ENCODE measurements at regions of chr18 and their contacts with region 1.

Region 1: DNA sequence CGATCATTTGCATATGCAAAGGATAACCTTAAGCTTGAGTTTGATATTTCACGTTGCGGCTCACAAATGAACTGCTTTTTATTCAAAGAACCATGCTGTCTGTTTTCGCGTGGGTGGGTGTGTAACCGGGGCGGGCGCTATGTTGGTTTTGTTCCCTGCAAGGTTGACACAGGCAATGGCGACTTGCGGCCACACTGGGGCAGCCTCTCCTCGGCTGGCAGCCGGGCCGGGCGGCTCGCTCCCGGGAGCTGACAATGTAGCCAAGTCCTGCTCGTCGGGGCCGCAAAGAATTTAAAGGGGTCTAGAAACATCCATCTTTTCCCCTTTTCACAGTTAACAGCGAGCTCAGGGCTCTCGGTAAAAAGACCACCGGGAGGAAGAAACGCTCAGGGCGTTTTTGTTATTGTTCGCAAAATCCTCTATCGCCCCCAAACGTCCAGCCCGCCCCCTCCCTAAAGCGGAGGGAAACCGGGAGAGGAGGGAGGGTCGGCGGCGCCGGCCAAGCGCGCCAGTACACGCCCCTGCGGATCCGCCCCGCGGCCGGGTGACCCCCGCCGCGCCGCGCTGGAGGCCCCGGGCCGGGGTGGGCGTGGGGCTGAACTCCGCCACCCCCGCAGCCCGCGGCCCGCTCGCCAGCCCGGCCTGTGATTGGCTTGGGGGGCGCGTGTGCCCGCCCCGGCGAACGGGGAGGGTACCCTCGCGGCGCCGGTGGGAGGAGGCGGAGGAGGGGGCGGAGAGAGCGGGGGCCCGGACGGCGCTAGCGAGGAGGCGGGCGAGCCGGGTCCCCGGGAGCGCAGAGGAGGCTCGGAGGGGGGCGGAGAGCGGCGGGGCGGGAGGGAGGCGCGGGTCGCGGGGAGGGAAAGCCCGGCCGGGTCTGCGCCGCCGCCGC is at the start of gene NEDD4L:
- DNase-seq: peak; percentile 91
- H3K4me3 ChIP-seq: peak within 1 kb of the TSS; percentile 87
- H3K27ac ChIP-seq: peak within 1 kb of the TSS; percentile 78
- H3K4me1 ChIP-seq: peaks cover 5% of the 10 kb centered on the region
- H3K27me3 ChIP-seq: no peaks in the 10 kb centered on the region
- CTCF ChIP-seq: peak; percentile 92
- total RNA-seq, gene NEDD4L: 15.3 and 23.8 TPM in 2 replicates

Region 2: DNA sequence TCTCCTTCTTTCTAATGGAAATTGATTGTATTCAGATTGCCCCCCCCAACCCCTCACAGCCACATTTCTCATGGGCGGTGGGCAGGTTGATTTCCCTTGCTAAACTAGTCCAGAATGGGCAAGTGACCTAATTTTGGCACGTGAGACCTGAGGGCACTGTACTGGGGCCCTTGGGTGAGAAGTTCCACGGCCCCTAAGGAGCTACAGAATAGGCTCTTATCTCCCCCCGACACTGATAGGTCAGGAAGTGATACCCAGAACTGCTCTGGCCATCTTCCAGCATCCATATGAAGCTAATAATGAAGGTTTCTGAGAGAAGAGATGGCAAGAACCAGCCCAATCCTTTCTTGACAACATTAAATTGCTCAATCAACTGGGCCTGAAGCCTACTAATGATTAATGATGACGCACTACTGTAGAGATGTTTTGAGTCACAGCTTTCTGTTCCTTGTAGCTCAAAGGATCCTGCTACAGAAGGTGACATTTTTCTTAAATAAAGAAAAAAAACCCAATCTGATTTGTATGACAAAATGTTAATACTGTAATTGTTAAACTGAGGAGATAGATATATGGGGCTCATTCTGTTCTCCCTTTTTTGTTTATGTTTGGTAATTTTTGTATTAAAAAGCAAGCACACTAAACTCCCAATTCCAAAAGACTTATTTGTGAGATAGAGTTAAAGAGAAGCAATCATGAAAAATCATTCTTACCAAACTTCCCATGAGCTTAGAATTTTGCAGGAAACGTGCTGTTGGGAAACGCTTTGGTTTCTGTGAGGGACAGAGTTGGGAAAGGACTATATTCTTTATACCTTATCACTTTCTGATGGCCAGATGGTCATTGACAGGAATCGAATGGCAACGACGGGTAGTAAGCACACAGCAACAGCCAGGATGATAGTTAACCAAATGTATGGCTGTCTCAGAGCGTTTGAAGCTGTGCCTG is 393.9 kb before region 1 on chr18:
- CTCF ChIA-PET with region 1: no interaction called
- POLR2A ChIA-PET with region 1: no interaction called
- intact Hi-C with region 1: loop called (anchors 10 kb)
- DNase-seq: peak; percentile 48
- H3K4me3 ChIP-seq: no peak overlapping the region
- H3K27ac ChIP-seq: peak overlapping the region; percentile 12
- H3K4me1 ChIP-seq: peaks cover 22% of the 10 kb centered on the region
- H3K27me3 ChIP-seq: no peaks in the 10 kb centered on the region
- CTCF ChIP-seq: no peak

Region 3: GRCh38 chr18:58117786-58118403 is 74.2 kb after region 1 on chr18:
- CTCF ChIA-PET with region 1: interaction called, 21 read pairs
- POLR2A ChIA-PET with region 1: no interaction called
- intact Hi-C with region 1: loop called (anchors 5 kb)
- DNase-seq: no peak
- H3K4me3 ChIP-seq: no peak overlapping the region
- H3K27ac ChIP-seq: no peak overlapping the region
- H3K4me1 ChIP-seq: no peaks in the 10 kb centered on the region
- H3K27me3 ChIP-seq: no peaks in the 10 kb centered on the region
- CTCF ChIP-seq: no peak

Region 4: DNA sequence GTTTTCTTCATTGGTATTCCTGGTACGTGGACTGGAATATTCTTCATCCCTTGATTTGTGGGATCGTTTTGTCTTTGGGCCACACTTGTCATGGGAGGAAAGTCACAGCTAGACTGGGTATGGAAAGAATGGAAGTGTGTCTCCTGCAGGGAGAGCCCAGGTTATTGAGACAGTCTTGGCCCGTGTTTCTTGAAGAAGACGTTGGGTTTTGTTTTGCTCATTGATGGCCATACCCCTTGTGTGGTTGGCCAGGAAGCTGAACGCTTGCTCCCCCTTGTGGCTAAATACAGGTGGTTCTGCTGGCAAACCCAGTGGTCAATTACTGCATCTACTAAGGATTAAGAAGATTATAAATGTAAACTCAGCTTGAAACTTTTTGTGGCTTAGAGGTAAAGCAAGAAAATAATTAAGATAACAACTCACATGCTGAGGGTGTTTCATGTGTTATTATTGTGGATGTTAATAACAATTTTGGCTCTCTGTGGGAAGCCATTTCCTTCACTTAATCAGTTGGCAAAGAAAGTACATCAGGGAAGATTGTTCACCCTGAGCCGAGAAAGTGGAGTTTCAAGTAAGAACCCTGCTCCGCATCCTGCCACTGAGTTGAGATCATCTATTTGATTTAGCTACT is 92.1 kb after region 1 on chr18:
- CTCF ChIA-PET with region 1: interaction called, 4 read pairs
- POLR2A ChIA-PET with region 1: no interaction called
- intact Hi-C with region 1: loop called (anchors 1 kb)
- DNase-seq: peak; percentile 90
- H3K4me3 ChIP-seq: no peak overlapping the region
- H3K27ac ChIP-seq: no peak overlapping the region
- H3K4me1 ChIP-seq: peaks cover 17% of the 10 kb centered on the region
- H3K27me3 ChIP-seq: peaks cover 68% of the 10 kb centered on the region
- CTCF ChIP-seq: peak; percentile 96

Region 5: GRCh38 chr18:58321986-58322385 is 278.3 kb after region 1 on chr18:
- CTCF ChIA-PET with region 1: no interaction called
- POLR2A ChIA-PET with region 1: interaction called, 3 read pairs
- intact Hi-C with region 1: loop called (anchors 10 kb)
- DNase-seq: peak; percentile 84
- H3K4me3 ChIP-seq: no peak overlapping the region
- H3K27ac ChIP-seq: no peak overlapping the region
- H3K4me1 ChIP-seq: peaks cover 18% of the 10 kb centered on the region
- H3K27me3 ChIP-seq: no peaks in the 10 kb centered on the region
- CTCF ChIP-seq: peak; percentile 72